Aorta (tissue), 5 donors: ENCODE measurements at regions of chr7 and their contacts with region 1.

Region 1: GRCh38 chr7:100611974-100612729 is at the start of gene MOSPD3:
- DNase-seq: peak; percentile 99 to 100
- ATAC-seq: peak; percentile 98
- H3K4me3 ChIP-seq: peak within 1 kb of the TSS; percentile 58 to 62
- H3K27ac ChIP-seq: peak within 1 kb of the TSS in 1 of 2 donors; percentile 87
- H3K4me1 ChIP-seq: no peaks in the 10 kb centered on the region
- H3K27me3 ChIP-seq: no peaks in the 10 kb centered on the region
- total RNA-seq, gene MOSPD3: 15.1 to 19.1 TPM

Region 2: DNA sequence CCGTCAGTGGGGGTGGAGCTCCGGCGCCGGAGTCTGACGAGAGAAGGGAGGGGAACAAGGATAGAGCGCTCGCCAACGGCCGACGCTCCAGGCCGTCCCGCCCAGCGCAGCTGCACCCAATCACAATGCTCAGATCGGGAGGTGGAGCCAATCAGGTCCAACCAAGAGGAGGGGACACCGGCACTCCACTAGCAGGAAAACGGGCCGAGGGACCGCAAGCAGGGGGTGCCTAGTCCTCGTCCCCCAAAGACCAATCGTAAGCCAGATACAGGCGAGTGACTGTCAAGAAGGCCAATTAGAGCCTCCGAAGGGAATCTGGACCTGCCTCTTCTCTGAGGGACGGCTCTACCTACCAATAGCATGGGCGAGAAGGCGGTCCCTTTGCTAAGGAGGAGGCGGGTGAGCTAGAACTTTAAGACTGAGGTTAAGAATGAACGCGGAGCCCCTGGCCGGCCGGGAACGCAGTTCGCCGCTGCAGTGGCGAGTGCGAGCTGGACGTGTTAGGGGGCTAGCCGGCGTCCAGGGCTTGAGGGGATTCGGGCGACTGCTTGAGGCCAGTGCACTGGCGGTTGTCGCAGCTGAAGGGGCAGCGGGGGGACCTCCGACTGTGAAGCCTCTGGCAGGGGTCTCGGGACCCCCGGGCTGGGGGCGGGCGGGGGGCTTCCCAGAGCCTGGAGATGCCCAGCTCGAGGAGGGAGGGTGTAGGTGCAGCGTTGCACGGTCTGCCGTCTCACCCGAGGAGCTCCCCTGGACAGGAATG is 25.7 kb before region 1 on chr7 and contains the start of gene FBXO24:
- intact Hi-C with region 1: loop called in 1 of 2 experiments (anchors 2 kb)
- DNase-seq: peak; percentile 100
- ATAC-seq: peak; percentile 98
- H3K4me3 ChIP-seq: peak within 1 kb of the TSS; percentile 57 to 85
- H3K27ac ChIP-seq: peak within 1 kb of the TSS in 1 of 2 donors; percentile 72
- H3K4me1 ChIP-seq: no peaks in the 10 kb centered on the region
- H3K27me3 ChIP-seq: no peaks in the 10 kb centered on the region
- total RNA-seq, gene FBXO24: 0.81 TPM in 1 of 2 donors, not detected in the other